Activated CD8-positive, alpha-beta T cell treated with anti-CD3 and anti-CD28 coated beads for 36 hours (primary cell): ENCODE measurements at regions of chr15 and their contacts with region 1.

Region 1: GRCh38 chr15:60585743-60586708 is 107.1 kb upstream of the ICE2 start:
- DNase-seq: peak; percentile 71
- ATAC-seq: no peak
- H3K4me3 Mint-ChIP-seq: peak overlapping the region; percentile 62
- H3K27ac Mint-ChIP-seq: peak overlapping the region; percentile 82
- H3K4me1 Mint-ChIP-seq: peaks cover 79% of the 10 kb centered on the region
- H3K27me3 Mint-ChIP-seq: no peaks in the 10 kb centered on the region
- CTCF ChIP-seq: peak; percentile 89

Region 2: GRCh38 chr15:60351066-60351465 is 235.0 kb before region 1 on chr15:
- CTCF ChIA-PET with region 1: no interaction called
- POLR2A ChIA-PET with region 1: no interaction called
- intact Hi-C with region 1: no loop called
- DNase-seq: no peak
- ATAC-seq: no peak
- H3K4me3 Mint-ChIP-seq: no peak overlapping the region
- H3K27ac Mint-ChIP-seq: no peak overlapping the region
- H3K4me1 Mint-ChIP-seq: no peaks in the 10 kb centered on the region
- H3K27me3 Mint-ChIP-seq: no peaks in the 10 kb centered on the region
- CTCF ChIP-seq: no peak

Region 3: DNA sequence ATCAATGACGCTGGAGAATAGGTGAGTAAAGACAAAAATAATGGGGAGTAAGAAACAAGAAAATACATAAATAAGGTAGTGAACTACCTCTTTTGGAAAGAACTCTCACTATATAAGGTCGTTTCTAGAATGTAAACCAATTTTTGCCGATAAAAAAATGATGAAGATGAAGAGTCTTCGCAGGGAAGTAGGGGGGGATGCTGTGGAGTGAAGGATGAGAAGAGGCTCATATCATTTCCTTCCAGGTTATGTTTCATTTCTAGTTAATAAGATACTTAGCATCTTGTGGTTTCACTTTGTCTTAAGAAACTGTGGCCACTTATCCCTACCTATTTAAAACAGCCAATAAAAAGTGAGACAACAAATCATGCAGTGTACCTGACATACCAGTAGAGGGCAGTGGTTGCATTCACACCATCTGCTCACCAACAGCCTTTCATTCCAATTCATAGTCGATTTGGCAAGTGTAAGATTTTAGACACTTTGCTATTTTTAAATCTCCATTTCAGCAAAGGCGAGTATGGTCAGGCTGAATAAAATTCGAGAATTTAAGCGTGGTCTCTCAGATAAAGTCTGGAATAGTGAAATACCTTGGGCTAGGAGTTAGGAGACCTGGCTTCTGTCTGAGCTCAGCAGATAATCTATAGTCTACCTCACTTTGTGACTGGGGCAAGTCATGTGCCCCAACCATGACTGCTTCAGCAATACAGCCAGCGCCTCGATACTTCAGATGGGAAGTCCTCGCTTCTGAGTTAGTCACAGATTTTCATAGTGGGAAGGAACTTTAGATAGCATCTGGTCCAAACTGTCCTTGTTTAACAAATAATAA is 78.2 kb before region 1 on chr15:
- CTCF ChIA-PET with region 1: interaction called, 52 read pairs
- POLR2A ChIA-PET with region 1: interaction called, 9 read pairs
- intact Hi-C with region 1: loop called (anchors 5 kb)
- DNase-seq: peak; percentile 69
- ATAC-seq: peak; percentile 81
- H3K4me3 Mint-ChIP-seq: no peak overlapping the region
- H3K27ac Mint-ChIP-seq: peak overlapping the region; percentile 73
- H3K4me1 Mint-ChIP-seq: peaks cover 48% of the 10 kb centered on the region
- H3K27me3 Mint-ChIP-seq: no peaks in the 10 kb centered on the region
- CTCF ChIP-seq: peak; percentile 94

Region 4: GRCh38 chr15:60548101-60548500 is 37.9 kb before region 1 on chr15:
- CTCF ChIA-PET with region 1: interaction called, 42 read pairs
- POLR2A ChIA-PET with region 1: interaction called, 11 read pairs
- intact Hi-C with region 1: loop called (anchors 5 kb)
- DNase-seq: peak; percentile 86
- ATAC-seq: peak; percentile 81
- H3K4me3 Mint-ChIP-seq: peak overlapping the region; percentile 70
- H3K27ac Mint-ChIP-seq: peak overlapping the region; percentile 96
- H3K4me1 Mint-ChIP-seq: peaks cover 93% of the 10 kb centered on the region
- H3K27me3 Mint-ChIP-seq: no peaks in the 10 kb centered on the region
- CTCF ChIP-seq: no peak

Region 5: GRCh38 chr15:60649845-60650548 is 64.0 kb after region 1 on chr15:
- CTCF ChIA-PET with region 1: interaction called, 19 read pairs
- POLR2A ChIA-PET with region 1: interaction called, 3 read pairs
- intact Hi-C with region 1: loop called (anchors 5 kb)
- DNase-seq: peak; percentile 66
- ATAC-seq: peak; percentile 85
- H3K4me3 Mint-ChIP-seq: peak overlapping the region; percentile 63
- H3K27ac Mint-ChIP-seq: peak overlapping the region; percentile 84
- H3K4me1 Mint-ChIP-seq: peaks cover 35% of the 10 kb centered on the region
- H3K27me3 Mint-ChIP-seq: no peaks in the 10 kb centered on the region
- CTCF ChIP-seq: no peak

Region 6: DNA sequence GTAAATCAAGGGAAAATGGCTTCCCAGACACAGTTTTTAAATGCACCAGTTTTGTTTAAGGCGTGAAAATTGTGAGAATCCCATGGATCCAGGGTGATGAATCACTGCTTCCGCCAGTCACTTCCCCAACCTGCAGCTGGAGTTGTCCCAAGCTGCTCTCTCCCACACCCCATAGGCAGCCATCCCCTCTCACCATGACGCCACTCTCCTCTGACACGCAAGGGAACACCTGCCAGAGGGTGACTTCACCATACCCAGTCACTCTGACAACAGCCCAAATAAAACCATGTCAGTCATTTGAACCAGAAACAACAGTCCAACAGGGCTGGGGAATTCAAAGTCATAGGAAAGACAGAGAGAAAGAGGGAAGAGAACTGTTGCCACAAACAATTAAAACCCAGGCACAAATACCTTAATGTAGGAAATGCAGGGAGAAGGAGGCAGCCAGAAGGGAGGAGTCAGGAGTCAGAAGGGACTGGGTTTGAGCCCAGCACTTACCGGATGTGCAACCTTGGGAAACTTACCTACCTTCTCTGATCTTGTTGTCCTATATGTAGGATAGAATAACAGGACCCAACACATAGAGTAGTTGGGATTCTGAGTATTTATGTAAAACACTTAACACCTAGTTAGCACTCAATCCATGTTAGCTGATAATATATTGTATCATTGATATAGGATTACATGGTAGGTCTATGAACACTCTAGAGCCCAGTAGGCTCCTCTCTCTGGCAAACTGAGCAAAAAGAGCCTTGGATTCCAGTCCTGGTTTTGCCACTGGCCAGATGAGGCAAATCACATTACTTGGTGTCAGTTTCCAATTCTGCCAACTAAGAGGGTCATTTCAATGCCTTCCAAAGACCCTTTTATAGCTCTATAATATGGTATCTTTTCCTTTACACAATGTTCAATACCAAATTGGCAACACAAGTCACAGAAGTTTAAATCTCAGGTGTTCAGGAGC is 219.2 kb after region 1 on chr15:
- CTCF ChIA-PET with region 1: interaction called, 5 read pairs
- POLR2A ChIA-PET with region 1: no interaction called
- intact Hi-C with region 1: loop called (anchors 5 kb)
- DNase-seq: no peak
- ATAC-seq: no peak
- H3K4me3 Mint-ChIP-seq: no peak overlapping the region
- H3K27ac Mint-ChIP-seq: no peak overlapping the region
- H3K4me1 Mint-ChIP-seq: peaks cover 69% of the 10 kb centered on the region
- H3K27me3 Mint-ChIP-seq: no peaks in the 10 kb centered on the region
- CTCF ChIP-seq: no peak

Region 7: DNA sequence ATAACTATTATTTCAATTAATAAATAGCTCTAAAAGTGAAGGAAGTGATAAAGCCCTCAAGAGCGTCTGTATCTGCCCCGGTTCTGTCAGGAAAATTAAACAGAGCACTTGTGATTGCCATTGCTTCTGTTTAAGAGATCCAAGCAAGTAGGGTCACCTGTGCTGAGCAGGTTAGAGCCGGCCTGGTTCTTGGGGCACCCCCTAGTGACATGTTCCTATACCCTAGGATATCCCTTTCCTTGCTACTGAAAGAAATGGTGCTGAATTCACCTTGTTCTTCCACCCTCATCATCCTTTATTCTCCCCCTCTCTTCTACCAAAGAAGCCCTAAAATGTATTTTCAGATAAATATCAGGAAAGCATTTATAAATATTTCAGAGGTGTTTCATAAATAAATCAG is 319.6 kb after region 1 on chr15:
- CTCF ChIA-PET with region 1: interaction called, 18 read pairs
- POLR2A ChIA-PET with region 1: no interaction called
- intact Hi-C with region 1: loop called (anchors 5 kb)
- DNase-seq: peak; percentile 24
- ATAC-seq: no peak
- H3K4me3 Mint-ChIP-seq: no peak overlapping the region
- H3K27ac Mint-ChIP-seq: no peak overlapping the region
- H3K4me1 Mint-ChIP-seq: peaks cover 34% of the 10 kb centered on the region
- H3K27me3 Mint-ChIP-seq: peaks cover 2% of the 10 kb centered on the region
- CTCF ChIP-seq: no peak